Activated CD4-positive, alpha-beta memory T cell treated with anti-CD3 and anti-CD28 coated beads for 36 hours (primary cell): ENCODE measurements at regions of chr6 and their contacts with region 1.

Region 1: GRCh38 chr6:73515204-73515655 is 5.6 kb downstream of the EEF1A1 start:
- DNase-seq: peak; percentile 19
- H3K4me3 Mint-ChIP-seq: peak overlapping the region; percentile 98
- H3K27ac Mint-ChIP-seq: peak overlapping the region; percentile 87
- H3K4me1 Mint-ChIP-seq: peaks cover 46% of the 10 kb centered on the region
- H3K27me3 Mint-ChIP-seq: peaks cover 10% of the 10 kb centered on the region

Region 2: DNA sequence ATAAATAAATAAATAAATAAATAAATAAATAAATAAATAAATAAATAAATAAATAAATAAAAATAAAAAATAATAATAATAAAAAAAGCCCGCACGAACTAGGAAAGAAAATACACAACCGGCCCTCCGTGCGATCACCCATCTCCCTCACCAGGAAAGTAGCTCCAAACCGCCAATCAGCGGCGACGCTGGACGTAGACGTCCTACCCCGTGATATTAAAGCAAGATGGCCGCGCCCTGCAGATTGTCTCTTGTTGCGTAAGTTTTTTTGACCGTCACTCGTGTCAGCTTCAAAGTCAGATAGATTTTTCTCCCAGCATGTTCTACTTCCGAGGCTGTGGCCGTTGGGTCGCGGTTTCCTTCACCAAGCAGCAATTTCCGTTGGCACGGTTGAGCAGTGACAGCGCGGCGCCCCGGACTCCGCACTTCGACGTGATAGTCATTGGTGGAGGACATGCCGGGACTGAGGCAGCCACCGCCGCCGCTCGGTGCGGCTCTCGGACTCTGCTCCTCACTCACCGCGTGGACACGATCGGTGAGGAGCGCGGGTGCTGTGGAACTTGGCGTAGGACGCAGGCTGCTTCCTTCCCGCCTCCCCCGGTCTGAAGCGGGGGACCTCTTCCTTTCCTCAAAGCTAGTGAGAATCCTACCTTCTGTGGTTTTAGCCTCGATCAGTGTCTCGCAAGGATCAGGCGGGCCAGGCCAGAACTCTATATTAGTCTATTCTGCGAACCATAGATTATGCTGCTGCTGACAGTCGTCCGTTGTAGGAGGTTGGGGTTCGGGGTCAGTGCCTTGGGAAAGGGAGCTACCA is 53.5 kb before region 1 on chr6 and contains the start of gene MTO1:
- CTCF ChIA-PET with region 1: interaction called, 3 read pairs
- POLR2A ChIA-PET with region 1: interaction called, 50 read pairs
- intact Hi-C with region 1: no loop called
- DNase-seq: peak; percentile 91
- H3K4me3 Mint-ChIP-seq: peak within 1 kb of the TSS; percentile 97
- H3K27ac Mint-ChIP-seq: peak within 1 kb of the TSS; percentile 97
- H3K4me1 Mint-ChIP-seq: peaks cover 40% of the 10 kb centered on the region
- H3K27me3 Mint-ChIP-seq: no peaks in the 10 kb centered on the region
- total RNA-seq, gene MTO1: 40.7 to 47.7 TPM

Region 3: GRCh38 chr6:73503027-73503772 is 12.0 kb before region 1 on chr6:
- CTCF ChIA-PET with region 1: interaction called, 6 read pairs
- POLR2A ChIA-PET with region 1: interaction called, 17 read pairs
- intact Hi-C with region 1: no loop called
- DNase-seq: no peak
- H3K4me3 Mint-ChIP-seq: no peak overlapping the region
- H3K27ac Mint-ChIP-seq: no peak overlapping the region
- H3K4me1 Mint-ChIP-seq: no peaks in the 10 kb centered on the region
- H3K27me3 Mint-ChIP-seq: no peaks in the 10 kb centered on the region

Region 4: GRCh38 chr6:73610444-73611275 is 95.4 kb after region 1 on chr6:
- CTCF ChIA-PET with region 1: interaction called, 16 read pairs
- POLR2A ChIA-PET with region 1: interaction called, 17 read pairs
- intact Hi-C with region 1: loop called (anchors 1 kb)
- DNase-seq: no peak
- H3K4me3 Mint-ChIP-seq: no peak overlapping the region
- H3K27ac Mint-ChIP-seq: no peak overlapping the region
- H3K4me1 Mint-ChIP-seq: no peaks in the 10 kb centered on the region
- H3K27me3 Mint-ChIP-seq: no peaks in the 10 kb centered on the region